ENCODE measurements at regions of chr10 and their contacts with region 1.

Region 1: DNA sequence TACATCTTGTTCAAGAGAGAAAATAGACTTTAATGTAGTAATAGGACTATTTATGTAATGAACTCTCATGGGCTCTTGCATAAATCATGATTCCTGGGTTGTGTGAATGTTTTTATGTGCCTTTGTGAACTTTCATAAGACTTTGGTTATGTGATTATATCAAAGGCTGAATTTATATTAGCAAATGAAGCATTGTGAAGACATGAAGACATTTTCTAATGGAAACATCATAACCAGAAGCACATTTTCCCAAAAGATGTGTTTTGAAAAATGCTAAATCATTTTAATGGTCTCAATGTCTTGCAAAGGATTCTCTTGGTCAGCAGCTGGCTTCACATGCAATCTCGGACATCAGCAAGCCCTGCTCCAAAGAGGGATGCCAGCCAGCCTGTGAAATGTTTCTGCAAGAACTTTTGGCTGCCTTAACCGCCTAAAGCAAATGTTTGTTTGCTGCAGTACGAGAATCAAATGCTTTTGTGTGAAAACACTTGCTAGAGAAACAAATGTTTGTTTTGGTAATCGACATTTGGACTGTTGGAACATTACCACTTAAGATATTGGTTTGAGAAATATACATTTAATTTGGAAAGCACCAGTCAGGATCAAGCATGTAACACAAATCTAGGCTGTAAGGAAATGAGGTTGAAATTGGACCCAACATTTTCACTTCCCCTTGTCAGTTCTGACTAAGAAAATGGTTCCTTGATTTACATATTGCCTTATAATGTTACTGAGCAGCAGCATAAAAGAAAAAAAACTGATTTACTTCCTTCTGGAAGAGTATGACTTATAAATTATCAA is 102.1 kb downstream of the RTKN2 start:
- DNase-seq: no peak

Region 2: DNA sequence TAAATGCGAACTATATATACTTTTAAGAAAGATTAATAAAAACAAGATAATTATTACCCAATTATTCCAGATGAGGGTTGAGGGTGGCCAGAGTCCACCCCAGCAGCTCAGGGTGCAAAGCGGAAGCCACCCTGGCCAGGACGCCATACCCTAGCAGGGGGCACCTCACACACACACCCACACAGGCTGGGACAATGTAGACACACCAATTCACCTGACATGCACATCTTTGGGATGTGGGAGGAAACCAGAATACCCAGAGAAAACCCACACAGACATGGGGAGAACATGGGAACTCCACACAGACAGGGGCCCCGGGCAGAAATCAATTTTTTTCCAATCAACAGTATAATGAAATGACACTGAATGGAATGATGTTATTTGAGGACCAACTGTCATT is 16.1 kb after region 1 on chr10:
- intact Hi-C with region 1: loop called in 1 of 2 experiments (anchors 1 kb)
- DNase-seq: no peak

Measured in posterior vena cava (tissue), 2 donors.